ENCODE measurements at regions of chr2 and their contacts with region 1.

Region 1: DNA sequence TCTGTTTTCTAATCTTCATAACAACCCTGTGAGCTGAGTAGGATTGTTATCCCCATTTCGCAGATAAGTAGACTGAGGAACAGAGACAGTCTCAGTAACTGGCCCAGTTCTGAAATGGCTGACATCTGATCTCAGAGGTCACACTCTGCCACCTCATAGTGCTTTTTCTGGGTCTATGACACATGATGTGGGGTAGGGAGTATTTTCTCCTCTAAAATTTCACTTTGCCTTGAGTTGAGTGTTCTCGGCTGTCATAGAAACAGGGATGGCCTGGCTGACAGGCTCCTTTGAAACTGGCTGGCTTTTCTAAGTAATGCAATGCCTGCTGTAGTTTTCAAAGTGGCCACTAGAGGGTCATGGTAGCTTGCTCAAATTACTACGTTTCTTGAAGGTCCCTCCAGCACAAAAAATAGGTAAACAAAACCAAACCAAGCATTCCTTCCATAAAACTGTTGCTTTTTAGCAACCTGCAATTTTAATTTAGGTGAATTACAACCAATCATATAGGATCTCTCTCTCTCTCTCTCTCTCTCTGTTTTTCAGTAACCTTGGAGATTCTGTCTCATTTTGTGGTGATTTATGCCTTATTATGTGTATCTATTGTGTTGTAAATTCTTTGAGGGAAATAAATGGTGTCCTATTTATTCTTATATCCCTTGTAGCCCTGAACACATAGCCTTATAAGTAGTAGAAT is 84.2 kb upstream of the TTN start:
- DNase-seq: peak in 4 of 5 donors; percentile 17 to 36 (median 32)
- H3K4me3 ChIP-seq: no peak overlapping the region
- H3K4me3 Mint-ChIP-seq: no peak overlapping the region
- H3K27ac ChIP-seq: no peak overlapping the region
- H3K27ac Mint-ChIP-seq: no peak overlapping the region
- H3K4me1 ChIP-seq: no peaks in the 10 kb centered on the region
- H3K4me1 Mint-ChIP-seq: peaks cover 0 to 5% (median under 1%) of the 10 kb centered on the region in 4 donors
- H3K27me3 ChIP-seq: no peaks in the 10 kb centered on the region
- H3K27me3 Mint-ChIP-seq: no peaks in the 10 kb centered on the region

Region 2: GRCh38 chr2:178874529-178875240 is 16.7 kb before region 1 on chr2:
- CTCF ChIA-PET with region 1: interaction called, 40 read pairs
- POLR2A ChIA-PET with region 1: no interaction called
- intact Hi-C with region 1: no loop called
- DNase-seq: no peak
- H3K4me3 ChIP-seq: no peak overlapping the region
- H3K4me3 Mint-ChIP-seq: no peak overlapping the region
- H3K27ac ChIP-seq: no peak overlapping the region
- H3K27ac Mint-ChIP-seq: no peak overlapping the region
- H3K4me1 ChIP-seq: no peaks in the 10 kb centered on the region
- H3K4me1 Mint-ChIP-seq: peaks cover 0 to 2% (median 0%) of the 10 kb centered on the region in 4 donors
- H3K27me3 ChIP-seq: no peaks in the 10 kb centered on the region
- H3K27me3 Mint-ChIP-seq: peaks cover 0 to 1% of the 10 kb centered on the region in 2 donors

Region 3: DNA sequence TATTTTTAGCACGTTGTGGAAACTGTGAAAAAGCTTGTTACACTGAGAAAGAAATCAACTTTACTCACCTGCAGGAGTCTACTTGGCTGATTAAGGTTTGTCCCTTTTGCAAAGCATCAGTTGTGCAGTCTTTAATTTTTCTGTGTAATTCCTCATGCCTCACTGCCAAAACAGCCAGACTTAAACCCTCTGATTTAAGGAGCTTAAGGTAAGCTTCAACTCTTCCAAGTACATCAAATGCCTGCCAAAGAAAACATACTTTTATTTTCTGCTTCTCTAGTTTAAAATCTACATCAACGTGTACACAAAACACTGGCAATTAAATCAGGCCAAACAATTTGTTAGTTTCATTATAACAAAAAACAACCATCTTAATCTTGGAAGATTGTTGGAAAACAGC is 13.8 kb after region 1 on chr2:
- CTCF ChIA-PET with region 1: interaction called, 13 read pairs
- POLR2A ChIA-PET with region 1: no interaction called
- intact Hi-C with region 1: no loop called
- DNase-seq: no peak
- H3K4me3 ChIP-seq: no peak overlapping the region
- H3K4me3 Mint-ChIP-seq: no peak overlapping the region
- H3K27ac ChIP-seq: no peak overlapping the region
- H3K27ac Mint-ChIP-seq: no peak overlapping the region
- H3K4me1 ChIP-seq: no peaks in the 10 kb centered on the region
- H3K4me1 Mint-ChIP-seq: no peaks in the 10 kb centered on the region
- H3K27me3 ChIP-seq: no peaks in the 10 kb centered on the region
- H3K27me3 Mint-ChIP-seq: peaks cover 0 to 2% of the 10 kb centered on the region in 2 donors

Region 4: DNA sequence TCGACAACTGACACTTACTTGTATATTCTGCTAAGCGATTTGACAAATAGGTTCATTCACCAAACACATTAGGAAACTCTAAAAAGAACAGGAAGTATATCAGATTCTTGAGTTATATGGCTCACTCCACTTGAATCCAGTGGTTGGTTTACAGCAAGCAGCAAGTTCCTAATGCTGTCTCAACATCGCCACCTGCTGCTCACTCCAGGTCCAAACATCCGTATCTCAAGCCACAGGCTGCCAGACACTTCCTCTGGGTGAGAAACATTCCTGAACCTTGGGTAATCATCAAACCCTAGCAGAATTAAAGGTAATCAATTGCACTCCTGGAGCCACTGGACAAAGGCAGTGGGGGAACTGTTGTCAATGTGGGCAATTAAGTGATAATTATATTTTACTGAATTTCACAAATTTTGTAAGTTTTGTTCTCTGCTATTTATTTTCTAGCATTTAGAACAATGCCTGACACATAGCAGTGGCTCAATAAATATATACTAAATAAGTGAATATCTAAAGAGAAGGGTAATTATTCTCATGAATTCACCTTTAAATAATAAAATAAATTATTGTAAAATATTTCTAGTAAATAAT is 22.9 kb after region 1 on chr2:
- CTCF ChIA-PET with region 1: interaction called, 7 read pairs
- POLR2A ChIA-PET with region 1: no interaction called
- intact Hi-C with region 1: loop called (anchors 2 kb)
- DNase-seq: peak; percentile 37 to 53 (median 44)
- H3K4me3 ChIP-seq: no peak overlapping the region
- H3K4me3 Mint-ChIP-seq: no peak overlapping the region
- H3K27ac ChIP-seq: no peak overlapping the region
- H3K27ac Mint-ChIP-seq: peak overlapping the region in 1 of 7 donors; percentile 84
- H3K4me1 ChIP-seq: no peaks in the 10 kb centered on the region
- H3K4me1 Mint-ChIP-seq: peaks cover 0 to 1% (median 0%) of the 10 kb centered on the region in 4 donors
- H3K27me3 ChIP-seq: no peaks in the 10 kb centered on the region
- H3K27me3 Mint-ChIP-seq: peaks cover 1 to 2% of the 10 kb centered on the region in 2 donors

Region 5: GRCh38 chr2:179129574-179130238 is 238.3 kb after region 1 on chr2:
- CTCF ChIA-PET with region 1: interaction called, 70 read pairs
- POLR2A ChIA-PET with region 1: no interaction called
- intact Hi-C with region 1: loop called (anchors 1 kb)
- DNase-seq: peak in 3 of 5 donors; percentile 11 to 13 (median 13)
- H3K4me3 ChIP-seq: no peak overlapping the region
- H3K4me3 Mint-ChIP-seq: no peak overlapping the region
- H3K27ac ChIP-seq: no peak overlapping the region
- H3K27ac Mint-ChIP-seq: peak overlapping the region in 1 of 7 donors; percentile 18
- H3K4me1 ChIP-seq: no peaks in the 10 kb centered on the region
- H3K4me1 Mint-ChIP-seq: no peaks in the 10 kb centered on the region
- H3K27me3 ChIP-seq: no peaks in the 10 kb centered on the region
- H3K27me3 Mint-ChIP-seq: no peaks in the 10 kb centered on the region

Region 6: GRCh38 chr2:179440642-179441251 is 549.3 kb after region 1 on chr2:
- CTCF ChIA-PET with region 1: interaction called, 3 read pairs
- POLR2A ChIA-PET with region 1: no interaction called
- intact Hi-C with region 1: loop called (anchors 2 kb)
- DNase-seq: peak in 3 of 5 donors; percentile 11 to 32 (median 18)
- H3K4me3 ChIP-seq: no peak overlapping the region
- H3K4me3 Mint-ChIP-seq: no peak overlapping the region
- H3K27ac ChIP-seq: no peak overlapping the region
- H3K27ac Mint-ChIP-seq: no peak overlapping the region
- H3K4me1 ChIP-seq: no peaks in the 10 kb centered on the region
- H3K4me1 Mint-ChIP-seq: no peaks in the 10 kb centered on the region
- H3K27me3 ChIP-seq: no peaks in the 10 kb centered on the region
- H3K27me3 Mint-ChIP-seq: peaks cover 2% of the 10 kb centered on the region in 2 donors

Region 7: DNA sequence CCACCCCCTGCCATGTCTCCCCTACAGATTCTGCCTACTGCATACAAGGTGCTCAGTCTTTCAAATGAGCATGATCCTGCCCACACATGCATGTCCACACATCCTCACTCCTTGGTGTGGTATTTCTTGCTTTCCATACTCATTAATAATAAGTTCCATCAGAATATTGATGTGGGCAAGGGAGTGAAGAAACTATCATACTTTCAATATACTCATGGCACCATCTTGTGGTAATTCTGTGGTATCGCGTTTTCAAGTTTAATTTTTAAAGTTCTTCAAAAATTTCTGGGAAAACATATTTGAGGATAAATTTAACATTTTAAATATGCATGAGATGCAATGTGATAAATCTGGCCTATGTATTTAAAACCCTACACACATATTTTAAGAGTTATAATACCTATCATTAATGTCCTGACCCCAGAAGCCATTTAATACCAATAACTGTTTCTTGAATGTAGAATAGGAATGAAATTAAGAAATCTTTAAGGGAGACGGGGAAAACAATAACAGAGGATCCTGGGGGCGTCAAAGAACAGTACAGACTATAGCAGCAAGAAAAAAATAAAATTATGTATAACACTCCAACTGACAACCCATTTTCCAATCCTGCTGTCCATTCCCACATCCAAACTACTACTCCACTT is 859.9 kb after region 1 on chr2:
- CTCF ChIA-PET with region 1: no interaction called
- POLR2A ChIA-PET with region 1: no interaction called
- intact Hi-C with region 1: loop called (anchors 5 kb)
- DNase-seq: no peak
- H3K4me3 ChIP-seq: no peak overlapping the region
- H3K4me3 Mint-ChIP-seq: no peak overlapping the region
- H3K27ac ChIP-seq: no peak overlapping the region
- H3K27ac Mint-ChIP-seq: no peak overlapping the region
- H3K4me1 ChIP-seq: no peaks in the 10 kb centered on the region
- H3K4me1 Mint-ChIP-seq: no peaks in the 10 kb centered on the region
- H3K27me3 ChIP-seq: no peaks in the 10 kb centered on the region
- H3K27me3 Mint-ChIP-seq: no peaks in the 10 kb centered on the region

Measured in CD4-positive, alpha-beta memory T cell (primary cell).